ENCODE measurements at regions of chr2 and their contacts with region 1.

Region 1: GRCh38 chr2:143259368-143259958 is 130.2 kb downstream of the ARHGAP15 start:
- DNase-seq: peak; percentile 76
- H3K4me3 Mint-ChIP-seq: peak overlapping the region; percentile 4
- H3K27ac Mint-ChIP-seq: no peak overlapping the region
- H3K4me1 Mint-ChIP-seq: peaks cover 14% of the 10 kb centered on the region
- H3K27me3 Mint-ChIP-seq: no peaks in the 10 kb centered on the region
- CTCF ChIP-seq: peak; percentile 64

Region 2: GRCh38 chr2:143034292-143035074 is 225.0 kb before region 1 on chr2:
- CTCF ChIA-PET with region 1: interaction called, 6 read pairs
- POLR2A ChIA-PET with region 1: interaction called, 3 read pairs
- intact Hi-C with region 1: loop called (anchors 1 kb)
- DNase-seq: peak; percentile 82
- H3K4me3 Mint-ChIP-seq: no peak overlapping the region
- H3K27ac Mint-ChIP-seq: no peak overlapping the region
- H3K4me1 Mint-ChIP-seq: no peaks in the 10 kb centered on the region
- H3K27me3 Mint-ChIP-seq: no peaks in the 10 kb centered on the region
- CTCF ChIP-seq: peak; percentile 79

Region 3: DNA sequence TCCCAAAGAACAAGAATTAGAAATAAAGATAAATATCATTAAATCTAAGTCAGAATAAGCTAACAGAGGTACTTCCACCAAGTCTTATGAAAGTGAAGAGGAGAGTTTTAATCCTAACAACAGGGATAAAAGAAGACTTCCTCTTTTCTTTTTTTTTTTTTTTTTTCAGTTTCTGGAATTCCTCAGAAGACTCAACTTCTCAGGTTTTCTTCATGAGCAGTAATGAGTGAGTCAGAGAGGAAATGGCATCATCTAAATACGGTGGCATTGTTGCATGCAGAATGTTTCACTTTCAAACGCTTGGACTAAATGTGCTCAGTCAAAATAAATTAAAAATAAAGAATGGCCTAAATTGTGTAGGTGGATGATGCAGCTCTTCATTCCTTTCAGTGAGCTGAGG is 175.8 kb before region 1 on chr2:
- CTCF ChIA-PET with region 1: interaction called, 10 read pairs
- POLR2A ChIA-PET with region 1: no interaction called
- intact Hi-C with region 1: loop called (anchors 1 kb)
- DNase-seq: peak; percentile 76
- H3K4me3 Mint-ChIP-seq: peak overlapping the region; percentile 33
- H3K27ac Mint-ChIP-seq: peak overlapping the region; percentile 35
- H3K4me1 Mint-ChIP-seq: peaks cover 6% of the 10 kb centered on the region
- H3K27me3 Mint-ChIP-seq: no peaks in the 10 kb centered on the region
- CTCF ChIP-seq: no peak

Region 4: GRCh38 chr2:143121079-143121478 is 138.4 kb before region 1 on chr2:
- CTCF ChIA-PET with region 1: no interaction called
- POLR2A ChIA-PET with region 1: no interaction called
- intact Hi-C with region 1: no loop called
- DNase-seq: no peak
- H3K4me3 Mint-ChIP-seq: no peak overlapping the region
- H3K27ac Mint-ChIP-seq: no peak overlapping the region
- H3K4me1 Mint-ChIP-seq: no peaks in the 10 kb centered on the region
- H3K27me3 Mint-ChIP-seq: no peaks in the 10 kb centered on the region
- CTCF ChIP-seq: no peak

Region 5: GRCh38 chr2:143162123-143162837 is 97.2 kb before region 1 on chr2:
- CTCF ChIA-PET with region 1: interaction called, 72 read pairs
- POLR2A ChIA-PET with region 1: interaction called, 3 read pairs
- intact Hi-C with region 1: loop called (anchors 1 kb)
- DNase-seq: peak; percentile 56
- H3K4me3 Mint-ChIP-seq: no peak overlapping the region
- H3K27ac Mint-ChIP-seq: no peak overlapping the region
- H3K4me1 Mint-ChIP-seq: no peaks in the 10 kb centered on the region
- H3K27me3 Mint-ChIP-seq: peaks cover 12% of the 10 kb centered on the region
- CTCF ChIP-seq: peak; percentile 80

Region 6: GRCh38 chr2:143205106-143205764 is 54.2 kb before region 1 on chr2:
- CTCF ChIA-PET with region 1: interaction called, 29 read pairs
- POLR2A ChIA-PET with region 1: interaction called, 5 read pairs
- intact Hi-C with region 1: loop called (anchors 1 kb)
- DNase-seq: peak; percentile 9
- H3K4me3 Mint-ChIP-seq: no peak overlapping the region
- H3K27ac Mint-ChIP-seq: no peak overlapping the region
- H3K4me1 Mint-ChIP-seq: peaks cover 5% of the 10 kb centered on the region
- H3K27me3 Mint-ChIP-seq: no peaks in the 10 kb centered on the region
- CTCF ChIP-seq: peak; percentile 43

Region 7: DNA sequence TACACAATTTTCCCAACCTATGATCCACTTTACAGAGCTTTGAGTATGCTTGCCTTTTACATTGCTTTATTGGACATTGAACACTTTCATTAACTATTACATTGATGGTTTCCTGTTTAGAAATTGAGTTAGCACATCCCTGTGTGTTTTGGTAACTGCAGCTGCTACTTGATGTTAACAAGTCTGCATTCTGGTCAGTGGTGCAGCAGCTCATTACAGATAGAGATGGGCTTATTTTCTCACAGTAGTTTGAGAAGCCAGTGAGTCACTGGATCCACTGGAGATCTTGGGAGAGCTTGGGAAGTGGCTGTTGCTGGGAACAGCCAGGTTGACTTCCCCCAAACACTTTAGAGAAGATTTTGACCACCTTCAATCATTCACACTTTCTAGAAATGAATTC is 20.2 kb after region 1 on chr2:
- CTCF ChIA-PET with region 1: interaction called, 11 read pairs
- POLR2A ChIA-PET with region 1: interaction called, 3 read pairs
- intact Hi-C with region 1: no loop called
- DNase-seq: no peak
- H3K4me3 Mint-ChIP-seq: no peak overlapping the region
- H3K27ac Mint-ChIP-seq: no peak overlapping the region
- H3K4me1 Mint-ChIP-seq: peaks cover 7% of the 10 kb centered on the region
- H3K27me3 Mint-ChIP-seq: no peaks in the 10 kb centered on the region
- CTCF ChIP-seq: no peak

Region 8: GRCh38 chr2:143296089-143296488 is 36.6 kb after region 1 on chr2:
- CTCF ChIA-PET with region 1: no interaction called
- POLR2A ChIA-PET with region 1: no interaction called
- intact Hi-C with region 1: no loop called
- DNase-seq: no peak
- H3K4me3 Mint-ChIP-seq: no peak overlapping the region
- H3K27ac Mint-ChIP-seq: no peak overlapping the region
- H3K4me1 Mint-ChIP-seq: no peaks in the 10 kb centered on the region
- H3K27me3 Mint-ChIP-seq: no peaks in the 10 kb centered on the region
- CTCF ChIP-seq: no peak

Region 9: GRCh38 chr2:143433251-143433650 is 173.8 kb after region 1 on chr2:
- CTCF ChIA-PET with region 1: no interaction called
- POLR2A ChIA-PET with region 1: no interaction called
- intact Hi-C with region 1: no loop called
- DNase-seq: peak; percentile 6
- H3K4me3 Mint-ChIP-seq: no peak overlapping the region
- H3K27ac Mint-ChIP-seq: no peak overlapping the region
- H3K4me1 Mint-ChIP-seq: peaks cover 12% of the 10 kb centered on the region
- H3K27me3 Mint-ChIP-seq: no peaks in the 10 kb centered on the region
- CTCF ChIP-seq: no peak